ENCODE measurements at regions of chr14 and their contacts with region 1.

Region 1: GRCh38 chr14:24098927-24099813 is 5.1 kb downstream of the PCK2 start:
- DNase-seq: no peak
- ATAC-seq: no peak
- H3K4me3 ChIP-seq: no peak overlapping the region
- H3K4me3 Mint-ChIP-seq: no peak overlapping the region
- H3K27ac ChIP-seq: no peak overlapping the region
- H3K27ac Mint-ChIP-seq: no peak overlapping the region
- H3K4me1 ChIP-seq: peaks cover 10% of the 10 kb centered on the region
- H3K4me1 Mint-ChIP-seq: peaks cover 18% of the 10 kb centered on the region
- H3K27me3 ChIP-seq: no peaks in the 10 kb centered on the region
- H3K27me3 Mint-ChIP-seq: no peaks in the 10 kb centered on the region
- CTCF ChIP-seq: no peak

Region 2: DNA sequence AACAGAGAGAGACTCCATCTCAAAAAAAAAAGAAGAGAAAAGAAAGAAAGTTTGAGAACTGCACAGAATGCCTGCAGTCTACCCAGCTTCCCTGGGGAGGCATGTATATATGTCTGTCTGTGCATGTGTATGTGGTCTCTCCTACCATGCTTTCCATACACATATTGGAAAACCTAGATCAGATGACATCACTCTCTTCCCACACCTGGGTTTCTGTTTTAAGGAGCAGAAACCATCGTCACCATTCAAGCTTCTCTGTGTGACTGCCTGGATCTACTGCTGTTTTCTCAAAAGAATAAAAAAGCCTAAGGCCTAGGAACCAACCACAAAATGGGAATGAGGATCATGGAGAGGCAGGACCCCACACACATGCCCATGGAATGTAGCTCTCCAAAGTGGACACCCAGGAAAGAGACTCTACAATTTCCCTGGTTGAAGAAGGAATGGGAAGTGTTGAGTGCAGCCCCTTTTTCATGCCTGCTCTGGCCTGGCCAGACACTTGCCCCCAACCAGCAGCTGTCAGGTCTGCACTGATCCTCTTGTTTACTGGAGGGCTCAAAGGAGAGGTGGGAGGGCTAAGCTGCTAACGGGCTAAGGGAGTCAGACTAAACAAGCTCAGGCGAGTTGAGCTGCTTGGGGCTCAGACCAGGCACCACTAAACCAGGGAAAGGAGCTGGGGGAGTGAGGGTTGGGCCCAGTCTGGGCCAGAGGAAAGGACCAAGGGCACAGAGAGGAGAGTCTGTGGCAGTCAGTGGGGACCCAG is 12.8 kb before region 1 on chr14:
- CTCF ChIA-PET with region 1: interaction called, 217 read pairs
- POLR2A ChIA-PET with region 1: interaction called, 41 read pairs
- intact Hi-C with region 1: loop called in 1 of 2 experiments (anchors 1 kb)
- DNase-seq: no peak
- ATAC-seq: no peak
- H3K4me3 ChIP-seq: no peak overlapping the region
- H3K4me3 Mint-ChIP-seq: no peak overlapping the region
- H3K27ac ChIP-seq: no peak overlapping the region
- H3K27ac Mint-ChIP-seq: no peak overlapping the region
- H3K4me1 ChIP-seq: peaks cover 10% of the 10 kb centered on the region
- H3K4me1 Mint-ChIP-seq: peaks cover 17% of the 10 kb centered on the region
- H3K27me3 ChIP-seq: no peaks in the 10 kb centered on the region
- H3K27me3 Mint-ChIP-seq: no peaks in the 10 kb centered on the region
- CTCF ChIP-seq: no peak

Region 3: GRCh38 chr14:24143511-24143910 is 44.3 kb after region 1 on chr14:
- CTCF ChIA-PET with region 1: no interaction called
- POLR2A ChIA-PET with region 1: no interaction called
- intact Hi-C with region 1: no loop called
- DNase-seq: no peak
- ATAC-seq: no peak
- H3K4me3 ChIP-seq: no peak overlapping the region
- H3K4me3 Mint-ChIP-seq: peak overlapping the region; percentile 3
- H3K27ac ChIP-seq: peak overlapping the region in 1 of 2 experiments; percentile 0
- H3K27ac Mint-ChIP-seq: peak overlapping the region; percentile 37
- H3K4me1 ChIP-seq: peaks cover 43% of the 10 kb centered on the region
- H3K4me1 Mint-ChIP-seq: peaks cover 65% of the 10 kb centered on the region
- H3K27me3 ChIP-seq: no peaks in the 10 kb centered on the region
- H3K27me3 Mint-ChIP-seq: no peaks in the 10 kb centered on the region
- CTCF ChIP-seq: no peak